Activated T-helper 1 cell treated with anti-CD3 and anti-CD28 coated beads, Interleukin-12 subunit alpha, Interleukin-12 subunit beta, Interleukin-2, Interleukin-4 antibody, amounts not matched to agents 30 ng/mL and 10 ng/mL and 1 ng/mL, durations not matched to agents 14 hours and 24 hours and 36 hours (primary cell): ENCODE measurements at regions of chr5 and their contacts with region 1.

Region 1: GRCh38 chr5:18761801-18762200 is 1127.5 kb downstream of the TAF11L14 start:
- DNase-seq: no peak
- H3K4me3 Mint-ChIP-seq: no peak overlapping the region
- H3K27ac Mint-ChIP-seq: no peak overlapping the region
- H3K4me1 Mint-ChIP-seq: peaks cover 6% of the 10 kb centered on the region
- H3K27me3 Mint-ChIP-seq: peaks cover 3% of the 10 kb centered on the region

Region 2: DNA sequence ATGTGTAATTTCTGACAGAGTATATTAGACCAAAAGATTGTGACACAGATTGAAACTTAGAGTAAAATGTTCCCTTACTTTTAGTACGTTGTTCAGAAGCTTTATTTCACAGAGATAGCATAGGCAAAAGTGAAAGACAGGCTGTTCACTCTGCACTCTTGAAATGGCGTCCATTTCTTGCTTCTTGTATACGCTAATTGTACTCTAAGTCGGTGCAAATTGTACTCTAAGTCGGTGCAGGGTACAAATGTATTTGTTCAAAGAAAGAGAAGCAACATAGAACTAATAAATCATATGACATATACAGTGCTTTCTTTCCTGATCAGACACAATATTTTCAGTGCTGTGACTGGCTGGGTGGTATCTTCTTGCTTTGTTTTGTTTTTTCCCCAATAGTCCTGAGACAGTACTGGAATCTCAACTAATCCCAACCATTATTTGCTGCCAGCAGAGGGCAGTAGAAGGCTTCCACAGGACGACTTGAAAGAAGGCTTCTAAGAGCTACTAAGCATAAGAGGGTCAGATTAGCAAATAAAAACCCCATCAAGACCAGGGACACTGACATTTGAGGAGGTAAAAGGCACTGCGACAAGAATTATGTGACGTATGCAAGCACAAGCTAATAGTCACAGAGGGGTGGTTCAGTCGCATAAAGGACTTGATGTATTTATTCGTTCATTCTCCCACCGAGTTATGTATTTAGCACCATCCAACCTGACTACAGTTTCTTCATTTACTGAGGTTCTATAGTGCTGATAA is 295.8 kb before region 1 on chr5:
- intact Hi-C with region 1: loop called (anchors 10 kb)
- DNase-seq: peak; percentile 9
- H3K4me3 Mint-ChIP-seq: no peak overlapping the region
- H3K27ac Mint-ChIP-seq: no peak overlapping the region
- H3K4me1 Mint-ChIP-seq: no peaks in the 10 kb centered on the region
- H3K27me3 Mint-ChIP-seq: no peaks in the 10 kb centered on the region

Region 3: GRCh38 chr5:18576342-18576741 is 185.5 kb before region 1 on chr5:
- intact Hi-C with region 1: no loop called
- DNase-seq: no peak
- H3K4me3 Mint-ChIP-seq: no peak overlapping the region
- H3K27ac Mint-ChIP-seq: no peak overlapping the region
- H3K4me1 Mint-ChIP-seq: no peaks in the 10 kb centered on the region
- H3K27me3 Mint-ChIP-seq: no peaks in the 10 kb centered on the region

Region 4: DNA sequence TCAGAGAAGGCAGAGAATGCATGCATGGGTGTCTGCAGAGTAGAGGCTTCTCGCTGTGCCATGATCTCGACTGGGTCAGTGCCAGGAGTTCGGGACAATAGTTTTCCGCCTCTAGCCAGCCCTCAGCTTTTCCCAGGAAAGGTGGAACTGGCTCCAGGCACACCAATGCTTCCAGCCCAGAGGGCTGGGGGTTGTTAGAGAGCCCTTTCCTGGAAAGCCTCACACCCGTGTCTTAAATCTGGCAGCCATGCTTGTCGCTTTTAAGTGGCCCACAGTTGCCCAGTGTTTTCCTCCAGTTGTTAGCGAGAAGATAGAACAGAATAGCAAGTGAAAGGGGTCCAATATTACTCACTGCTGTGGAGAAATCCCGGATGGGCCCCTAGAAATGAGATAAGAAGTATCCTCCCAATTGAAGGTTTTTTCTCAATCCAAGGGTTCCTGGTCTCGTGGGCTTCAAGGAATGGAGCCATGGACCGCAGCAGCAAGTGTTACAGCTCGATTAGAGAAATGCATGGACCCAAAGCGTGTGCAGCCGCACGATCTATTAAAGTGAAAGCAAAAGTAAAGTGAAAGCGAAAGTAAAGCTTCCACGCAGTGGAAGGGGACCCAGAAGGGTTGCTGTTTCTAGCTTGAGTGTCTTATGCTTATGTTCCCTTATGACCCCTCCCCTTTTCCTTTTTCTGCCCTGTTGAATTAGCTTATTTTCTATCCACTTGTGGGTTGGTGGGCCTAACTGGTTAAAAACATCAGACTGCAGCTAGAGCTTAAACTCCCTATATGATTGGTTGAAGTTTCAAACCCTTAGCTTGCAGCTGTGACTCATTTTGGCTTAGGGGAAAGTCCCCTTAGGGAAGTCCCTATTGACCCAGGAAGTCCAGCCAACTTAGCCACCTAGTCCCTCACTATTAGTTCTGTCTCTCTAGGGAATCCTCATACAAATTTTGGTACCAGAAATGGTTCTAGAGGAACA is 15.9 kb before region 1 on chr5:
- intact Hi-C with region 1: loop called (anchors 2 kb)
- DNase-seq: peak; percentile 31
- H3K4me3 Mint-ChIP-seq: peak overlapping the region; percentile 91
- H3K27ac Mint-ChIP-seq: peak overlapping the region; percentile 84
- H3K4me1 Mint-ChIP-seq: peaks cover 63% of the 10 kb centered on the region
- H3K27me3 Mint-ChIP-seq: peaks cover 2% of the 10 kb centered on the region

Region 5: DNA sequence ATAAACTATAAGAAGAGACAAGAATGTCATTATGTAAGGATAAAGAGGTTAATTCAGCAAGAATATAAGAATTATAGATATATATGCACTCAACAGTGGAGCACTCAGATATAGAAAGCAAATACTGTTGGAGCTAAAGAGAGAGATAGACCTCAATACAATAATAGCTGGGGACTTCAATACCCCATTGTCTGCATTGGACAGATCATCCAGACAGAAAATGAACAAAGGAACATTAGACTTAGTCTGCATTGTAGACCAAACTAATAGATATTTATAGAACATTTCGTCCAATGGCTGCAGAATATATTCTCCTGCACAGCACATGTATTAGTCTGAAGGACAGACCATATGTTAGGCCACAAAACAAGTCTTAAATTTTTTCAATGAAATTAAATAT is 449.1 kb after region 1 on chr5:
- intact Hi-C with region 1: loop called (anchors 5 kb)
- DNase-seq: no peak
- H3K4me3 Mint-ChIP-seq: no peak overlapping the region
- H3K27ac Mint-ChIP-seq: no peak overlapping the region
- H3K4me1 Mint-ChIP-seq: no peaks in the 10 kb centered on the region
- H3K27me3 Mint-ChIP-seq: no peaks in the 10 kb centered on the region